B cell (primary cell): ENCODE measurements at regions of chr1 and their contacts with region 1.

Region 1: DNA sequence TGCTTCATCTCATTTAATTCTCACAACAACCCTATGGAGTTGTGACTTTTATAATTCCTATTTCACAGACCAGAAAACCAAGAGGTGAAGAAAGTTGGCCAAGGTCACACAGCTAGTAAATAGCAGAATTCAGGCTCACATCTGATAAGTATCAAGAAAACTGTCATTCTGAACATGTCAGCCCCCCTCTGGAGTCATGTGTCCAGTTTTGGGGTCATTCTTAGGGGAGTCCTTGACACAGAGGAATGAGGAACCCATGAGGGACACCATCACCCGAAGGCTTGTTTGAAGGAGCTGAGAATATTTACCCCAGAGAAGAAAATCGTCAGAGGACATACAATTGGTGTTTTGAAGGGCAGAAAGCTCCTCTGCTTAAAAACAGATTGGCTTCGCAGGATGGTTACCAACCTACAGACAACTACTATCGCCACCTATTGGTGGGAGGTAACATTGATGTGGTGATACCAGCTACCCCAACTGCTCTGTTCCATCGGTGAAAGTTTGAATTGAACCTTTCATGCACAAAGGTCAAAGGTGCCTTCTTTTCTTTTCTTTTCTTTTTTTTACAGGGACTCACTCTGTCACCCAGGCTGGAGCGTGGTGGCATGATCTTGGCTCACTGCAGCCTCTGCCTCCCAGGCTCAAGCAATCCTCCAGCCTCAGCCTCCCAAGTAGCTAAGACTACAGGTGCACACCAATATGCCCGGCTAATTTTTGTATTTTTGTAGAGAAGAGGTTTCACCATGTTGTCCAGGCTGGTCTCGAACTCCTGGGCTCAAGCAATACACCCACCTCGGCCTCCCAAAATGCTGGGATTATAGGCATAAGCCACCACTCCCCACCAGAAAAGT is 31.3 kb downstream of the NCMAP start:
- DNase-seq: peak; percentile 81
- ATAC-seq: peak; percentile 94
- H3K4me3 ChIP-seq: no peak overlapping the region
- H3K4me3 Mint-ChIP-seq: no peak overlapping the region
- H3K27ac ChIP-seq: no peak overlapping the region
- H3K27ac Mint-ChIP-seq: no peak overlapping the region
- H3K4me1 ChIP-seq: peaks cover 4% of the 10 kb centered on the region in 2 donors
- H3K4me1 Mint-ChIP-seq: peaks cover 8% of the 10 kb centered on the region
- H3K27me3 ChIP-seq: peaks cover 0 to 3% (median 0%) of the 10 kb centered on the region in 4 experiments
- H3K27me3 Mint-ChIP-seq: no peaks in the 10 kb centered on the region
- CTCF ChIP-seq: peak; percentile 81

Region 2: DNA sequence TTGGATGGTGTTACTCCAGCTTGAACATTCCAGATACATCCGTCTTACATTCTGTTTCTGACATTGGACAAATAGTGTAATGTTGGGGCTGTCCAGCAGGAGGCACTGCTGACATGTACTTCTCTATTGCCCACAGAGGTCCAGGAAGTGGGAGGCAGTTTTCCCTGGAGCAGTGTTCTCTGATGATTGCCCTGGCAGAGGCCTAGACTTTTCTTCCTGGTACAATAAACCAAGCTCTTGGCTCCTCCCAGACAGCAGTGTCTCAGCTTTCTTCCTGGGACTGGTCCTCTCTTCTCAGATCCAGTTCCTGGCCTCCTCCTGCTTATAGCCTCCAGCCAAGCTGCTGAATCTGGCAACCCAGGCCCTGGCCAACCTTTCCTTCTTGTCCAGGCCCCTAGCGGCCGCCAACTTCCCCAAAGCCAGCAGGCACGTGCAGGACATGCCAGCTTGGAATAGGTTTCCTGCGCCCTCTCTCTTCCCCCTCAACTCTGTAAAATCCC is 385.2 kb before region 1 on chr1:
- CTCF ChIA-PET with region 1: interaction called, 52 read pairs
- POLR2A ChIA-PET with region 1: interaction called, 4 read pairs
- intact Hi-C with region 1: no loop called
- DNase-seq: peak; percentile 69
- ATAC-seq: peak; percentile 32
- H3K4me3 ChIP-seq: no peak overlapping the region
- H3K4me3 Mint-ChIP-seq: no peak overlapping the region
- H3K27ac ChIP-seq: no peak overlapping the region
- H3K27ac Mint-ChIP-seq: no peak overlapping the region
- H3K4me1 ChIP-seq: peaks cover 10 to 33% of the 10 kb centered on the region in 2 donors
- H3K4me1 Mint-ChIP-seq: peaks cover 29% of the 10 kb centered on the region
- H3K27me3 ChIP-seq: peaks cover 0 to 4% (median 0%) of the 10 kb centered on the region in 4 experiments
- H3K27me3 Mint-ChIP-seq: no peaks in the 10 kb centered on the region
- CTCF ChIP-seq: peak; percentile 82

Region 3: DNA sequence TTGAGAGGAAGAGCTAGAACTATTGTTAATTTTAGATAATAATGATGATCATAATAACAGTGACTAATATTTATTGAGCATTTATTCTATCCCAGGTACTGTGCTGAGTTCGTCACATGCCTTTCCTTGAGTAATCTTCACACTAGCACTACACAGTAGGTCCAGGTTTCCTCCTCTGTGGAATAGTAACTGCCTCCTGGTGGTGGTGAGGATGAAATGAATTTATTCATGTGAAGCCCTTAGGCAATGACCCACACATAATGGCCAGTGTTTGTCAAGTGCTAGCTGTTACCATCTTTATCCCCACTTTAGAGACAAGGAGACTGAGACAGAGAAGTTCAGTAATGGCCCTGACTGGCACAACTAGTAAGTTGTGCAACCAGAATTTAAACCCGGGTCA is 165.7 kb before region 1 on chr1:
- CTCF ChIA-PET with region 1: interaction called, 133 read pairs
- POLR2A ChIA-PET with region 1: interaction called, 7 read pairs
- intact Hi-C with region 1: no loop called
- DNase-seq: no peak
- ATAC-seq: no peak
- H3K4me3 ChIP-seq: no peak overlapping the region
- H3K4me3 Mint-ChIP-seq: no peak overlapping the region
- H3K27ac ChIP-seq: no peak overlapping the region
- H3K27ac Mint-ChIP-seq: no peak overlapping the region
- H3K4me1 ChIP-seq: peaks cover 13% of the 10 kb centered on the region in 2 donors
- H3K4me1 Mint-ChIP-seq: peaks cover 19% of the 10 kb centered on the region
- H3K27me3 ChIP-seq: no peaks in the 10 kb centered on the region
- H3K27me3 Mint-ChIP-seq: no peaks in the 10 kb centered on the region
- CTCF ChIP-seq: no peak

Region 4: GRCh38 chr1:24526940-24527542 is 60.2 kb before region 1 on chr1:
- CTCF ChIA-PET with region 1: interaction called, 17 read pairs
- POLR2A ChIA-PET with region 1: no interaction called
- intact Hi-C with region 1: loop called (anchors 10 kb)
- DNase-seq: peak; percentile 47
- ATAC-seq: no peak
- H3K4me3 ChIP-seq: no peak overlapping the region
- H3K4me3 Mint-ChIP-seq: no peak overlapping the region
- H3K27ac ChIP-seq: no peak overlapping the region
- H3K27ac Mint-ChIP-seq: no peak overlapping the region
- H3K4me1 ChIP-seq: no peaks in the 10 kb centered on the region
- H3K4me1 Mint-ChIP-seq: peaks cover 3% of the 10 kb centered on the region
- H3K27me3 ChIP-seq: no peaks in the 10 kb centered on the region
- H3K27me3 Mint-ChIP-seq: no peaks in the 10 kb centered on the region
- CTCF ChIP-seq: peak; percentile 71

Region 5: GRCh38 chr1:24575915-24576587 is 11.1 kb before region 1 on chr1:
- CTCF ChIA-PET with region 1: interaction called, 19 read pairs
- POLR2A ChIA-PET with region 1: no interaction called
- intact Hi-C with region 1: no loop called
- DNase-seq: no peak
- ATAC-seq: no peak
- H3K4me3 ChIP-seq: no peak overlapping the region
- H3K4me3 Mint-ChIP-seq: no peak overlapping the region
- H3K27ac ChIP-seq: no peak overlapping the region
- H3K27ac Mint-ChIP-seq: no peak overlapping the region
- H3K4me1 ChIP-seq: peaks cover 5 to 16% of the 10 kb centered on the region in 2 donors
- H3K4me1 Mint-ChIP-seq: peaks cover 15% of the 10 kb centered on the region
- H3K27me3 ChIP-seq: no peaks in the 10 kb centered on the region
- H3K27me3 Mint-ChIP-seq: no peaks in the 10 kb centered on the region
- CTCF ChIP-seq: no peak

Region 6: DNA sequence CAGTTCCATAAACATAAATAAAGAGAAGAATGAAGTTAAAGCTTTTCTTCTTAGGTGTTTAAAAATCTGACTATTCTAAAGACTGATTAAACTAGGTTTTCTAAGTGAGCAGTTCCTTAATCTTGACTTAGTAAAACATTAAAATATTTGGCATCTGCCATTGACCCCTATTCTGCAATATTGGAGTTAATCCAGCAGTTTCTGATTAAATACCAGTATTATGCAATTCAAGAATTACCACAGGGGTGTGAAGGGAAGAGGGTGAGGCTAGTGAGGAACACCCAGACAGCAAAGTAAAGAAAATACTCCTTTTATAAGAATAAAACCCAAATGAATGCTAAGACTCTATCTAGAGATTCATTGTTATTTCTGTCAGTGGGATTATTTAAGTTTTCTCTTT is 199.0 kb after region 1 on chr1:
- CTCF ChIA-PET with region 1: no interaction called
- POLR2A ChIA-PET with region 1: no interaction called
- intact Hi-C with region 1: no loop called
- DNase-seq: no peak
- ATAC-seq: no peak
- H3K4me3 ChIP-seq: no peak overlapping the region
- H3K4me3 Mint-ChIP-seq: no peak overlapping the region
- H3K27ac ChIP-seq: no peak overlapping the region
- H3K27ac Mint-ChIP-seq: no peak overlapping the region
- H3K4me1 ChIP-seq: no peaks in the 10 kb centered on the region
- H3K4me1 Mint-ChIP-seq: peaks cover 37% of the 10 kb centered on the region
- H3K27me3 ChIP-seq: no peaks in the 10 kb centered on the region
- H3K27me3 Mint-ChIP-seq: no peaks in the 10 kb centered on the region
- CTCF ChIP-seq: no peak